ENCODE measurements at regions of chr2 and their contacts with region 1.

Region 1: DNA sequence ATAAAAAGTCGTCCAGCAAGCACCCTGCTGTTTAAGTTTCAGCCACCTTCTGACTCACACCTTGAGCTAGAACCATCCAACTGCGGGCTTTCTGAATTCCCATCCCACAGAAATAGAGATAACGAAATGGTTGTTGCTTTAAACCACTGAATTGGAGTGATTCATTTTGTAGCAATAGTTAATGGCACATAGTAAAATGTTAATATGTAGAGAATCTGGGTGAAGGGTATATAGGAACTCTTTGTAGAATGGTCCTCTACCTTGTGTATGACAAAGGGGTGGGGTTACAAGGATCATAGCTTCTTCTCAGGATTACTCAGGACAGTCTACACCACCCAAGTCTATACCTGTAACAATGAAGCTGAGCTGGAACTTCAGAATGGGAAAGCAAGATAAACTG is 2.4 kb upstream of the MAPRE3 start:
- DNase-seq: no peak
- H3K4me3 ChIP-seq: no peak overlapping the region
- H3K27ac ChIP-seq: no peak overlapping the region
- H3K4me1 ChIP-seq: peaks cover 22 to 31% (median 27%) of the 10 kb centered on the region in 4 donors
- H3K27me3 ChIP-seq: no peaks in the 10 kb centered on the region
- CTCF ChIP-seq: no peak
- EP300 ChIP-seq: no peak
- POLR2A ChIP-seq: no peak

Region 2: DNA sequence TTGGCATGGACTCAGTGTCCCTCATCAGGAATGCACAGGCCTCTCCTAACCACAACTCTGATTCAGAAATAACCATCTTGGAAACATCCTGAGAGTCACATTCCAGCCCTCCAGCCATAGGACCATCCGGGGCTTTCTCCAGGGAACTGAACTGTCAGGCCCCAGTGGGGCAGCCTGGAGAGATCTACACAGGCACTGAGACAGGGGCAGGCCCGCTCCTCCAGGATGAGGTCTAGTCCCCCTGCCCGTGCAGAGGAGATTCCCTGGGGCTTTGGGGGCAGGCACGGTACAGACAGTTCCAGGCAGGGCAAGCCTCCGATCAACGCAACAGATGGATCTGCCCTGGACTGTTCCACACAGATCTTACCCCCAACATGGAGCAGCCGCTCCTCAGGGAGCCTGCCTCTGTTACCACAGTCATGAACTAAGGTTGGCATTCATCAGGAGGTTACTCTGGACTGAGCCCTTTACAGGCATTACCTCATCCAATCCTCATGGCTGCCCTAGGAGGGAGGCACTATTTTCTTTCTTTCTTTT is 263.5 kb before region 1 on chr2:
- intact Hi-C with region 1: no loop called
- DNase-seq: no peak
- H3K4me3 ChIP-seq: no peak overlapping the region
- H3K27ac ChIP-seq: peak overlapping the region in 1 of 5 donors; percentile 46
- H3K4me1 ChIP-seq: peaks cover 0 to 16% (median 6%) of the 10 kb centered on the region in 4 donors
- H3K27me3 ChIP-seq: peaks cover 0 to 39% (median 5%) of the 10 kb centered on the region in 3 donors
- CTCF ChIP-seq: no peak
- EP300 ChIP-seq: no peak
- POLR2A ChIP-seq: no peak

Region 3: DNA sequence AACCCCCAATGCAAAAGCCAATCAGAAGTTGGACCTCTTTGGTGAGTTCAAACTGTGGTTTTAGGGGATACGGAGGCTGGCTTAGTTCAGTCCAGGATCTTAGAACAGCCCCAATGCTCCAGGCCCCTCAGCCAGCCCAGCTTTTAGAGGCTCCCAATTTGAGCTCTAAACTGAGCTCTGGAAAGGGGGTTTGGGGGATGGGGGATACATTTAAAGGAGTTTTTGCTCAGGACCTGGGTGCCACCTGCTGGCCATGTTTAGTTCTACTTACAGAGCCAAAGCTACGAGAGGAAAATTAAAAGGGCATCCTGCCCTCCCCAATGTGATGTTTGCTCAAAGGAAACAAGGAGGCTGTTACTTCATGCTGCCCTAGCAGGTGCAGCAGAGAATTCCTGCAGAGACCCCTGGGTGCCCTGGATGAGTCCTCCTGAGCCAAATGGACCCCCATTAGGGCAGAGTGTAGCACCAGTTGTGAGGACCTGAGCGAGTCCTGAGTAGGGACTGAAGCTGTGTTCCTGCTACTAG is 48.9 kb after region 1 on chr2:
- intact Hi-C with region 1: loop called (anchors 5 kb)
- DNase-seq: peak; percentile 66 to 79
- H3K4me3 ChIP-seq: no peak overlapping the region
- H3K27ac ChIP-seq: no peak overlapping the region
- H3K4me1 ChIP-seq: peaks cover 0 to 55% (median 34%) of the 10 kb centered on the region in 4 donors
- H3K27me3 ChIP-seq: no peaks in the 10 kb centered on the region
- CTCF ChIP-seq: peak in 5 of 7 experiments; percentile 43 to 81 (median 73)
- EP300 ChIP-seq: no peak
- POLR2A ChIP-seq: no peak

Region 4: GRCh38 chr2:27123302-27124231 is 155.6 kb after region 1 on chr2 and contains the start of gene ABHD1:
- intact Hi-C with region 1: no loop called
- DNase-seq: peak; percentile 69 to 77
- H3K4me3 ChIP-seq: peak within 1 kb of the TSS; percentile 49 to 79 (median 61)
- H3K27ac ChIP-seq: peak within 1 kb of the TSS in 3 of 5 donors; percentile 50 to 69 (median 59)
- H3K4me1 ChIP-seq: peaks cover 11 to 25% (median 20%) of the 10 kb centered on the region in 4 donors
- H3K27me3 ChIP-seq: peaks cover 1 to 16% (median 12%) of the 10 kb centered on the region in 3 donors
- CTCF ChIP-seq: peak in 1 of 7 experiments; percentile 5
- EP300 ChIP-seq: no peak
- POLR2A ChIP-seq: no peak
- total RNA-seq, gene ABHD1: not detected